Esophagus muscularis mucosa (tissue), 4 donors: ENCODE measurements at regions of chr6 and their contacts with region 1.

Region 1: GRCh38 chr6:131627724-131628682 is at the start of gene MED23:
- DNase-seq: peak; percentile 97
- H3K4me3 ChIP-seq: peak within 1 kb of the TSS; percentile 64 to 92 (median 82)
- H3K27ac ChIP-seq: peak within 1 kb of the TSS; percentile 74 to 81 (median 79)
- H3K4me1 ChIP-seq: peaks cover 14 to 32% (median 28%) of the 10 kb centered on the region in 4 donors
- H3K27me3 ChIP-seq: no peaks in the 10 kb centered on the region
- CTCF ChIP-seq: peak; percentile 94 to 96 (median 94)
- EP300 ChIP-seq: no peak
- POLR2A ChIP-seq: no peak
- total RNA-seq, gene MED23: 17.1 to 21.2 (median 18.7) TPM

Region 2: GRCh38 chr6:131586543-131586942 is 41.5 kb before region 1 on chr6:
- intact Hi-C with region 1: loop called (anchors 5 kb)
- DNase-seq: no peak
- H3K4me3 ChIP-seq: no peak overlapping the region
- H3K27ac ChIP-seq: no peak overlapping the region
- H3K4me1 ChIP-seq: no peaks in the 10 kb centered on the region
- H3K27me3 ChIP-seq: no peaks in the 10 kb centered on the region
- CTCF ChIP-seq: no peak
- EP300 ChIP-seq: no peak
- POLR2A ChIP-seq: no peak